Activated CD4-positive, alpha-beta memory T cell treated with anti-CD3 and anti-CD28 coated beads for 36 hours (primary cell): ENCODE measurements at regions of chr1 and their contacts with region 1.

Region 1: DNA sequence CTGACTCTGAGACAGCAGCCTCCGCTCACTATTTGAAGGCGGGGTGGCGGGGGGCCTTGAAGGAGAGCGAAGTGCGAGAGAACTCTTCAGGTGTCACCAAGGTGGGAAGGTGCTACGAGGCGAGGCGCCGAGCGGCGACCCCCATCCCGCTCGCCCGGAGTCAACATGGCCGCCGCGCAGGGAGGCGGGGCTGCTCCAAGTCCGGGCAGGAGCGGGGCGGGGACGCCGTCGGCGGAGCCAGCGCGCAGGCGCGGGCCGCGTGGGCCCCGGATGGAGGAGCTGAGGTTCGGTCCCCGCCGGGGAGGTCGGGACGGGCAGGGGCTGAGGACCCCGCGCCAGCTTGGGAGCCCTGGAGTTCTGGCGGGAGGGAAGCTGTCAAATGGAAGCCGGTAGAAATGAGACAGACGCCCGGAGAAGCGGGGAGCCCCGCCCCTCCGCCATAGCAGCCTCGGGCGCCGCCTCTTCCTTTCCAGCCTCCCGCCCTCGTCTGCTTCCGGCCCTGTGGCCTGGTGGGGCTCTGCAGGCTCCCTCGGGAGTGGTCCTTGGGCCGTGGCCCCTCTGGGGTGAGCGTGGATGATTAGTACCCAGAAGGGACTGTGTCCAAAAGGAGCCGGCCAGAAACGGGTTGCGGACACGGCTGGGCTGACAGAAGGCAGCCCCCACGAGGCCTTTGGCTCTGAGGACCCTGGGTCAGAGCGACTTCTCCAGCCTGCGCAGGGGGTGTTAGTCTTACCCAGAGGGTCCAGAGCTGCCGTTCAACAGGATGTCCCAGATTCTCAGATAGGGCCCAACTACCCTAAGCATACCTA is at the start of gene PIGV:
- DNase-seq: peak; percentile 90
- H3K4me3 Mint-ChIP-seq: peak within 1 kb of the TSS; percentile 90
- H3K27ac Mint-ChIP-seq: peak within 1 kb of the TSS; percentile 99
- H3K4me1 Mint-ChIP-seq: peaks cover 77% of the 10 kb centered on the region
- H3K27me3 Mint-ChIP-seq: no peaks in the 10 kb centered on the region
- total RNA-seq, gene PIGV: 15.1 to 15.3 TPM

Region 2: DNA sequence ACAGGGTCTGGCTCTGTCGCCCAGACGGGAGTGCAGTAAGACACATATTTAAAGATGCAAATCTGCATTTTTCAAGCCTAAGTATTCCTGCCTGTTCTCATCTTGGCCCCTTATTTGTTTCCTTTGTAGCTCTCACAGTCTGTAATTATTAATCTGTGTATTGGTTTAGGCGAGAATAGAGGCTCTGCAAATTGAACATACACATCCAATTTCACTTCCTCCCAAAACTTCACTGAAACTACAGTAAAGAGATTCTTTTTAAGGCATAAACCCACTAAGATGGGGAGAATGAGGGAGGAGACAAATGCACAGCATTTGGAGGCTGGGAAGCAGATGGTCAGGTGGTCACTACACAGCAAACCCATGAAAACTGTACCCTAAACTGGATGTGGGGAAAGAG is 294.6 kb before region 1 on chr1:
- CTCF ChIA-PET with region 1: no interaction called
- POLR2A ChIA-PET with region 1: no interaction called
- intact Hi-C with region 1: no loop called
- DNase-seq: no peak
- H3K4me3 Mint-ChIP-seq: no peak overlapping the region
- H3K27ac Mint-ChIP-seq: no peak overlapping the region
- H3K4me1 Mint-ChIP-seq: no peaks in the 10 kb centered on the region
- H3K27me3 Mint-ChIP-seq: no peaks in the 10 kb centered on the region

Region 3: DNA sequence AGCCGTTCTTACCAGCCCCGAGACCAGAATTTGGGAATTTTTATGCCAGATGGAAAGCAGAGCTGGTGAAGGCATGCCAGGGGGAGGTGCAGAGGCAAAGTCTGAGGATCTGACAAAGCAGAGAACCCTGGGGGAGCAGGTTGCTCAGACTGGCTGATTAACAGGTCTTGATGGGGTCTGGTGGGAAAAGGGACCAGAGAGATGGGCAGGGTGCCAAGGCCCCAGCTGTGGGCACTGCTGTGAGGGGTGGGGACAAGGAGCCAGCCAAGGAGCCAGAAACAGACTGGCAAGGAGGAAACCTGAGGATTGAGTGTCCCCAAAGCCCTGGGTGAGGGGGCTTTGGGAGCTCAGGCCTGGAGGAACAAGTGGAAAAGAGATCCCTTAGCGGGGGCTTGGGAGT is 237.0 kb before region 1 on chr1:
- CTCF ChIA-PET with region 1: no interaction called
- POLR2A ChIA-PET with region 1: no interaction called
- intact Hi-C with region 1: no loop called
- DNase-seq: no peak
- H3K4me3 Mint-ChIP-seq: no peak overlapping the region
- H3K27ac Mint-ChIP-seq: peak overlapping the region; percentile 13
- H3K4me1 Mint-ChIP-seq: peaks cover 35% of the 10 kb centered on the region
- H3K27me3 Mint-ChIP-seq: no peaks in the 10 kb centered on the region

Region 4: DNA sequence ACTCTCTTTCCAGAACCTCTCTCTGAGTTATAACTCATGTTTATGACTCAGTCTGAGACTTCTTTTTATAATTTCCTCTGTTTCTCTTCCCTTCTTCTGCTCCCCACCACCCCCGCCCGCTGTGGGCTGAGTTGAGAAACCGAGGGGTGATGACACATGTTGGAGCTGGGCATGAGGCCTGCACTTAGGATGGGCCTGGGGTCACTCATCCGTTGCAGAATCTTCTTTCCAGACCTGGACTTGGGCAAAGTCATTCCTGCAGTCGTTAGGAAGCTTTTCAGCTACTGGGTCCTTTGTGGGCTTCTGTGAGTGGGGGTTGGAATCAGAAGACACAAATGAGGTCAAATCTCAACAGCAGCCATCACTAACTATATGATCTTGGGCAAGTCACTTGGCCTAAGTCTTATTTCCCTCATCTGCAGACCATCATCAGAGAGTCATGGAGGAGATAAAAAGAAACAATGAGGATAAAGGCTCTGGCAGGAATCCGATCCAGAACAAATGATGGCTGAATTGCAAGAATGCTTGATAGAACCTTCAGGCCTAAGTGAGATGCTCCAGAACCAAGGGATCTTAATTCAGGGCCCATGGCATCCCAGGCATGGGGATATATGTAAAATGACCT is 205.0 kb before region 1 on chr1:
- CTCF ChIA-PET with region 1: interaction called, 65 read pairs
- POLR2A ChIA-PET with region 1: interaction called, 12 read pairs
- intact Hi-C with region 1: loop called (anchors 1 kb)
- DNase-seq: peak; percentile 94
- H3K4me3 Mint-ChIP-seq: no peak overlapping the region
- H3K27ac Mint-ChIP-seq: peak overlapping the region; percentile 73
- H3K4me1 Mint-ChIP-seq: peaks cover 47% of the 10 kb centered on the region
- H3K27me3 Mint-ChIP-seq: no peaks in the 10 kb centered on the region

Region 5: GRCh38 chr1:26677306-26678115 is 110.4 kb before region 1 on chr1:
- CTCF ChIA-PET with region 1: interaction called, 37 read pairs
- POLR2A ChIA-PET with region 1: interaction called, 3 read pairs
- intact Hi-C with region 1: loop called (anchors 5 kb)
- DNase-seq: peak; percentile 76
- H3K4me3 Mint-ChIP-seq: no peak overlapping the region
- H3K27ac Mint-ChIP-seq: no peak overlapping the region
- H3K4me1 Mint-ChIP-seq: peaks cover 18% of the 10 kb centered on the region
- H3K27me3 Mint-ChIP-seq: no peaks in the 10 kb centered on the region

Region 6: GRCh38 chr1:26744075-26744959 is 43.6 kb before region 1 on chr1:
- CTCF ChIA-PET with region 1: interaction called, 53 read pairs
- POLR2A ChIA-PET with region 1: interaction called, 36 read pairs
- intact Hi-C with region 1: loop called (anchors 1 kb)
- DNase-seq: peak; percentile 91
- H3K4me3 Mint-ChIP-seq: peak overlapping the region; percentile 48
- H3K27ac Mint-ChIP-seq: peak overlapping the region; percentile 92
- H3K4me1 Mint-ChIP-seq: peaks cover 83% of the 10 kb centered on the region
- H3K27me3 Mint-ChIP-seq: no peaks in the 10 kb centered on the region

Region 7: DNA sequence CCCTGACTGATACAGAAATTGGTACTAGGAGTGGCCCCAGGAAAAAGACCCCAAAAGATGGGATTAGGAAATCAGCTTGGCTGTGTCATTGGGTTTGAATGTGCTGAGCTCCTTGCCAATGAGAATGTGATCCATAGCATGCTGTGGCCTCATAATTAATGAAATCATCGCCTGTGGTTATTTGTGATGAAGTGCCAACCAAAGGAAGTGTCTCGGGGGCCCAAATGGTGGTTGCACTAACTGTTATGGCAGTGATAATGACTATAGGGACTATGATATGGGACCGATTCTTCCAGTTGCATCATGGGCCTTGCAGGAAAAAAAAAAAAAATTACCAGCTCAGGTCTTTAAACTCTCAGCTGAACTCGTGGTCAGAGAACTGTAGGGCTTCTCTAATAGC is 23.1 kb after region 1 on chr1:
- CTCF ChIA-PET with region 1: interaction called, 52 read pairs
- POLR2A ChIA-PET with region 1: interaction called, 11 read pairs
- intact Hi-C with region 1: loop called (anchors 1 kb)
- DNase-seq: no peak
- H3K4me3 Mint-ChIP-seq: no peak overlapping the region
- H3K27ac Mint-ChIP-seq: peak overlapping the region; percentile 38
- H3K4me1 Mint-ChIP-seq: peaks cover 20% of the 10 kb centered on the region
- H3K27me3 Mint-ChIP-seq: no peaks in the 10 kb centered on the region

Region 8: GRCh38 chr1:26856604-26857469 is 68.9 kb after region 1 on chr1:
- CTCF ChIA-PET with region 1: no interaction called
- POLR2A ChIA-PET with region 1: no interaction called
- intact Hi-C with region 1: no loop called
- DNase-seq: no peak
- H3K4me3 Mint-ChIP-seq: no peak overlapping the region
- H3K27ac Mint-ChIP-seq: no peak overlapping the region
- H3K4me1 Mint-ChIP-seq: peaks cover under 1% of the 10 kb centered on the region
- H3K27me3 Mint-ChIP-seq: no peaks in the 10 kb centered on the region

Region 9: DNA sequence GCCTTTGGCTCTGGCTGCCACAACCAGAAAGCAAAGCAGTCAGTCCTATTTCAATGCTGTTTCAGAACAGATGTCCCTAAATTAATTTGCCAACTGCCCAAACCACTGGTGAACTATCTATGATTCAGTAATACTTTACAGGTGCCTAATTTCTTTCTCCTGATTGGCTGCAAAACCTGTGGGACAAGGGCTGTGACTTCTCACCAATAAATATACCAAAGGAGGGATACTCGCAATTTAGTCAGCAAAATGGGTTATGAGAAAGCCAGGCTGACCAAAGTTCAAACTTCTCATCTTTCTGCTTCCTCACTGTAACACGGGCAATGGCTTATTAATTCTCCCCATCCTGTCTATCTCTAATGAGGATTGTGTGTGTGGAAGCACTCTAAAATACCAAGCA is 89.4 kb after region 1 on chr1:
- CTCF ChIA-PET with region 1: interaction called, 8 read pairs
- POLR2A ChIA-PET with region 1: no interaction called
- intact Hi-C with region 1: loop called (anchors 2 kb)
- DNase-seq: no peak
- H3K4me3 Mint-ChIP-seq: no peak overlapping the region
- H3K27ac Mint-ChIP-seq: no peak overlapping the region
- H3K4me1 Mint-ChIP-seq: no peaks in the 10 kb centered on the region
- H3K27me3 Mint-ChIP-seq: no peaks in the 10 kb centered on the region